KBM-7 (cell line): ENCODE measurements at regions of chr2 and their contacts with region 1.

Region 1: DNA sequence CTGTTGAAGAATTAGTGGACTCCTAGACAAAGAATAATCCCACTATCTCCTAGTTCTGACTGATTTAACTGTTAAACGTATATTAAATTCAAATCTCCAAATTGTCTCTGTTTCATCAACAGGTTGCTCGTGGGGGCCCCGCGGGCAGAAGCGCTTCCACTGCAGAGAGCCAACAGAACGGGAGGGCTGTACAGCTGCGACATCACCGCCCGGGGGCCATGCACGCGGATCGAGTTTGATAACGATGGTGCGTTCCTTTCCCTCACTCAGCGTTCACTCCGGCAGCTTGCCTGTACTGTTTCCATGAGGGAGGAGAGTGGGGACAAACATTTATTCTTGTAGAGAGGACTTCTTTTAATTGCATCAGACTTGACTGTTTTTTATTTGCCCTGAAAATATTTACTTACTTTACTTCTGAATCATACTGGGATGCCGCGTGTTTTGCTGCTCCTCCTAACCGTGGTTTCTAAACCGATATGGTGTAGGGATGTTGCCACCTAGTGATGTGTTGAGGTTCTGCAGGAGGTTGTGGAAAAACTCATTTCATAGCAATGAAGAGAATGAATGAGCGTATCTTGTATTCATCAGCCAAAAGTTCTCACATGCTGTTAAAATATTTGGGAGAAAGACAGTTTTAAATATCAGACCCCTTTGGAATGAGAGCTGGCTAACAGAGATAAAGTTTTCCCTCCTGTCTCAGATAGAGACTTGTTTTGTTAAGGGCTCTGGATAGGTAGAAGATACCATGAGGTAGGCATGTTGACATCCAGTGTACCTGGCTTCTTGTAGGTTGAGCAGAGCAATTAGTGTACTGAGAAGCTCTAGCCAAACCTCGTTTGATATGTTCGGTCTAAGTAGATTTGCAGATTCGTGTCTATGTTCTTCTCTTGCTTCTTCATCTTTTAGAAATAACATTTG is 38.3 kb downstream of the ITGA6 start:
- DNase-seq: peak; percentile 89

Region 2: GRCh38 chr2:171703574-171704347 is 761.9 kb before region 1 on chr2:
- in situ Hi-C with region 1: loop called (anchors 25 kb)
- DNase-seq: peak; percentile 52

Region 3: DNA sequence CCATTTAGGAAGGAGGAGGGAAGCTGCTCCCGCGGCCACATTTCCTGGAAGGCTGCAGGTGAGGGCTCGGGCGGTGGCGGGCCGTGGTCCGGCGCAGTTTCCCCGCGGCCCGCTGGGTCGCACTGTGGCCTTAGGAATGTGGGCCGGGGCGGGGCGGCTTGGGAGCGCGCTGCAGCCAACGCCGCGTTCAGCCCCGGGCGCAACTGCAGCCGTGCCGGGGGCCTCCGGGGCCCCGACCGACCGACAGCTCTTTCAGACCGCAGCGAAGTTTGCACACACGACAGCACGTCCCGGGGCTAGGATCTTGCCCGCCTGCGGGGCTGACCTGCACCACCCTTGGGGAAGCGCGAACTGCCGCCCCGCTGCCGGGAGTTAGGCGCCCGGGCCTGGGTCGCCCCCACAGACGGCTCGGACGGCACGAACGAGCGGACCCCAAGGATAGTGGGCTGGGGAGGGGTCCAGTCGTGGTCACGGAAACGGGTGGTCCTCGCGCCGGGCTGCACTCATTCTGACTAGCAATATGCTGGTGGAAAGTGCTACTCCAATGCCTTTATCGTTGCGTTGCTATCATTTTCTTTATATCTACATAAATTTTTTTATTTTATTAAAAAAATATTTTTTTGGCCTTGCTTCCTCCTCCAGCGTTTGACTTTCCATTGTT is 293.0 kb before region 1 on chr2:
- in situ Hi-C with region 1: loop called (anchors 10 kb)
- DNase-seq: peak; percentile 83

Region 4: DNA sequence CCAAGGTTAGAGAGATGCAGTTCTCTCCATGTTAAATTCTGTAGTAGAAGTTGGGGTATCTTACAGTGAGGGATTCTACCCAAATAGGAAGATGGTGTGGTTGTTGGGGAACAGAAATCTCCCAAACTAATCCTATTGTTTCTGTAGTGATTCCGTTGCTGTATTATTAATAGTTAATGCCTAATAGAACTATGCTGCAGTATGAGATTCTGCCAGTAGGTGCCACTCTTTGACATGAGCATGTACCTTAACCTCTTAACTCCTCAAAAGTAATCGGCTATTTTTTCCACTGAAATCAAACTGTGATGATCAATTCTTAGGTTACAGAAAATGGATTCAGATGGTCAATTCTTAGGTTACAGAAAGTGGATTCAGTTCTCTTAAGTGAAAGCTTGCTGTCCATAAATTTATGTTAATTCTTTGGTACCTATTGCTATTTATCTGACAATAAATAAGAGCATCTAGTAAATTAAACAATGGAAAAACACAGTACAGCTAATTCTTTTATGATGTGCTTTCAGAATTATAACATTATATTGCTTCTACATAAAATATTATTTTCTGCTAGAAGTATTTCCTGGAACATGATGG is 265.1 kb before region 1 on chr2:
- in situ Hi-C with region 1: no loop called
- DNase-seq: peak; percentile 64

Region 5: GRCh38 chr2:172710584-172711024 is 244.9 kb after region 1 on chr2:
- in situ Hi-C with region 1: loop called (anchors 25 kb)
- DNase-seq: peak; percentile 67

Region 6: GRCh38 chr2:173027181-173028128 is 561.8 kb after region 1 on chr2:
- in situ Hi-C with region 1: no loop called
- DNase-seq: peak; percentile 85